T-cell (primary cell): ENCODE measurements at regions of chr21 and their contacts with region 1.

Region 1: DNA sequence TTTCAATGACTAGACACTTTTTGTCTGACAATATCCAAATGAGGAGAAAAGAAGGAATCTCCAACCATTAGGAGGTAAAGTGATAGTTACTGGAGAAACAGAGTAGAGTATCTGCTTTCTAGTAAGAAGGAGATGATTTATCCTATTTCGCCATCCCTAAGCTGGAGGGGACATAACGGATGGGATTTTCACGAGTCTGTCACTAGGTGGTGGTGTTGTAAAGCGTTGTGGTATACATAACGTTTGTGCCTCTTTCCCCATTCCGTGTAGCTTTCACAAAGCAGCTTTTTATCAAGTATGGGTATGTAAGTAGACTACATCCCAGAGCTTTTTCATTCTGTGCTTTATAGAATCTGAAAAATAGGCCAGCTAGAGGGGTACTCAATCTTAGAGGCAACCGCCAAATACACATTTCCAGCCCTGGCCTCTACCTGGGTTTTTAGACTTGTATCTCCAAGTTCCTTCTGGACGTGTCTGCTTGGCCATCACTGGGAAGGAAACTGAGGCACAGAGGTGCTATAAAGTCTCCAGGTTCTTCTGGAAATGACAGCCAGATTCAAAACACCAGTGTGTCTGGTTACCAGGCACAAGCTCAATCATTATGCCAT is 33.3 kb upstream of the FAM3B start:
- DNase-seq: peak in 32 of 35 experiments; percentile 10 to 82 (median 36)
- ATAC-seq: peak; percentile 81 to 94 (median 92)
- H3K4me3 ChIP-seq: no peak overlapping the region
- H3K4me3 Mint-ChIP-seq: no peak overlapping the region
- H3K27ac ChIP-seq: no peak overlapping the region
- H3K27ac Mint-ChIP-seq: peak overlapping the region in 1 of 2 donors; percentile 51
- H3K4me1 ChIP-seq: no peaks in the 10 kb centered on the region
- H3K4me1 Mint-ChIP-seq: no peaks in the 10 kb centered on the region
- H3K27me3 ChIP-seq: peaks cover 6 to 15% of the 10 kb centered on the region in 2 experiments
- H3K27me3 Mint-ChIP-seq: peaks cover 18 to 26% of the 10 kb centered on the region in 2 donors

Region 2: GRCh38 chr21:41460578-41461527 is 177.5 kb after region 1 on chr21:
- CTCF ChIA-PET with region 1: interaction called, 6 to 39 read pairs
- POLR2A ChIA-PET with region 1: no interaction called
- DNase-seq: peak; percentile 8 to 65 (median 41)
- ATAC-seq: peak; percentile 45 to 81 (median 76)
- H3K4me3 ChIP-seq: no peak overlapping the region
- H3K4me3 Mint-ChIP-seq: no peak overlapping the region
- H3K27ac ChIP-seq: no peak overlapping the region
- H3K27ac Mint-ChIP-seq: peak overlapping the region in 1 of 2 donors; percentile 55
- H3K4me1 ChIP-seq: no peaks in the 10 kb centered on the region
- H3K4me1 Mint-ChIP-seq: peaks cover 4 to 10% (median 7%) of the 10 kb centered on the region in 3 donors
- H3K27me3 ChIP-seq: no peaks in the 10 kb centered on the region
- H3K27me3 Mint-ChIP-seq: no peaks in the 10 kb centered on the region

Region 3: DNA sequence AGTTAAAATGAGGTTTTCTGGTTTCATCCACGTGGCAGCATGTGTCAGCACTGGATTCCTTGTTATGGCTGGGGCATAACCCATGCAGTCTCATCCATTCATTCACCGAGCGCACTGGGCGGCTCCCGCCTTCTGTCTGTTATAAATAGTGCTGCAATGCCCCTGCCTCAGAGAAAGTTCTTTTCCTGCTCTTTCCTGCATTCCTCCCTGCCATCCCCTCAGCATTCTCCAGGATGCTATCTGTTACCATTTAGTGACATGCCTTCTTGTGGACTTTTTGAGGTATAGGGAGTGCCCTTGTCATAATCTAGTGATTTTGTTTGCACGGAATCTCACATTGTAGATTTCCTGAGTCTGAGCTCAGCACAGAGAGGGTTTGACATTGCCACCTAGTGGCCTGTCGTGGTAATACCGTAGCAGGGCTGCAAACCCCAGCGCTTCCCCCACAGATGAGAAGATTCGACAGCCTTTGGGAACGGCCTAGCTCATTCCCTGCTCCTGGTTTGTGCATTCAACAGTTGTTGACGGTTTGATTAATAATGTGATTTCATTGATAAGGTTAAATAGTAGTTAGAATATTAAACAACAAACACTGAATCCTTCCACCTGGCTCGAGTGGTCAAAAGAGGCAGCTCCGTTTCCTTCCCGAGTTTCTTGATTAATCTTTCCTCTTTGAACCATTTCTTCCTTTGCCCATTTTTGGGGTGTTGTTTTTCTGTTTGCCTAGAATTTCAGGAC is 834.1 kb after region 1 on chr21:
- CTCF ChIA-PET with region 1: interaction called in 1 of 2 experiments, 14 read pairs
- POLR2A ChIA-PET with region 1: no interaction called
- DNase-seq: peak; percentile 29 to 86 (median 65)
- ATAC-seq: peak; percentile 86 to 91 (median 88)
- H3K4me3 ChIP-seq: peak overlapping the region in 1 of 2 donors; percentile 44
- H3K4me3 Mint-ChIP-seq: peak overlapping the region in 1 of 3 donors; percentile 58
- H3K27ac ChIP-seq: no peak overlapping the region
- H3K27ac Mint-ChIP-seq: peak overlapping the region in 1 of 2 donors; percentile 10
- H3K4me1 ChIP-seq: peaks cover 12 to 14% of the 10 kb centered on the region in 2 experiments
- H3K4me1 Mint-ChIP-seq: peaks cover 17 to 30% (median 25%) of the 10 kb centered on the region in 3 donors
- H3K27me3 ChIP-seq: peaks cover 0 to 71% of the 10 kb centered on the region in 2 experiments
- H3K27me3 Mint-ChIP-seq: peaks cover 38 to 68% of the 10 kb centered on the region in 2 donors